ENCODE measurements at regions of chr15 and their contacts with region 1.

Region 1: DNA sequence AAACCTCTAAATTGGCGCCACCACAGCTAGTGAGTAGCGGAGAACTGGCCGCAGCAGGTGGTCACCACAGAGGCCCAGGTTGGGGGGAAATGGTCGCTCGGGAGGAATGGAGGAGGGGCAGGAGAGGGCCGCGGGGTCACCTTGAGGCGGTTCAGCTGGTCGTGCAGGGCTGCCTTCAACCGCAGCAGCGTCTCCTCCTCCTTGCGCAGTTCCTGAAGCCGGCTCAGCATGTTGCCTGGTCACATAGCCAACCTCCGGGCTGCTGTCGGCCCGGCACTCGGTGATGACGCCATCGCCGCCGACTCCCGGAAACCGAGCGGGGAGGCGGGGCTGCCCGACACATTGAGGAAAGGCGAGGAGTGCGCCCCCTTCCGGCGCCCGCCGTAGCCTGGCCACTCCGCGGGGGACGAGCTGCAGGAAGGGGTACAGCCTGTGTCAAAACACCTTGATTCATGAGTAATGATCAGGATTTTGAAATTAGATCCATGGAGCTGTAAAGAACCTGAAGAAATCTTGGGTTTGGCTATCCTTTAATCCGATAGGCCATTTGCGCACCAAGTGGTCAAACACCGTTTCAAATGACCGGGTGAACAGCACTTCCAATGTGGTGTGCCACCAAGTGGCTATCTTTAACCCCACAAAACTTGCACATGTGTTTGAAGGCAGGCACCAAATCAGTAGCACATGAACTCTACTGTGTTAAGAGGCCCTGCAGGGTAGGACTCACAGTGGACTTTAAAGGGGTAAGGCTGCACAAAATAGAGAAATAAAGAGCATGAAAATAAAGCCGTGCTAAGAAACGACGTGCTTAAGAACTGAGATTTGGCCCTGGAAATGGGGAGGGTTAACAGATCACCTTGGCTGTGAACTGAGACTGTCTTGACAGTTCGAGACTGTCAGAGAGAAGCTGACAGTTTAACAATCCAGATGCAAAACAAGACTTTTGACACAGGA is at the start of gene SNAPC5:
- DNase-seq: peak; percentile 84 to 97 (median 88)
- ATAC-seq: peak; percentile 92
- H3K4me3 ChIP-seq: peak within 1 kb of the TSS; percentile 83
- H3K27ac ChIP-seq: peak within 1 kb of the TSS; percentile 93
- H3K4me1 ChIP-seq: peaks cover 5 to 13% of the 10 kb centered on the region in 2 experiments
- H3K27me3 ChIP-seq: no peaks in the 10 kb centered on the region
- CTCF ChIP-seq: peak; percentile 83 to 99 (median 94)
- EP300 ChIP-seq: peak; percentile 51; the same call in 1 of the 2 replicates
- POLR2A ChIP-seq: peak; percentile 87
- RAD21 ChIP-seq: peak; percentile 53 to 70
- polyA plus RNA-seq, gene SNAPC5: 155 TPM

Region 2: GRCh38 chr15:66293419-66294156 is 204.2 kb before region 1 on chr15 and contains the start of gene DIS3L:
- CTCF ChIA-PET with region 1: no interaction called
- POLR2A ChIA-PET with region 1: no interaction called
- in situ Hi-C with region 1: no loop called
- intact Hi-C with region 1: loop called (anchors 5 kb)
- DNase-seq: peak; percentile 71 to 90 (median 86)
- ATAC-seq: peak; percentile 90
- H3K4me3 ChIP-seq: peak within 1 kb of the TSS; percentile 45
- H3K27ac ChIP-seq: peak within 1 kb of the TSS; percentile 82
- H3K4me1 ChIP-seq: peaks cover 17 to 20% of the 10 kb centered on the region in 2 experiments
- H3K27me3 ChIP-seq: no peaks in the 10 kb centered on the region
- CTCF ChIP-seq: no peak
- EP300 ChIP-seq: 0 out of 2 replicates have a peak, but pooled peaks have one; percentile 14
- POLR2A ChIP-seq: peak; percentile 23
- RAD21 ChIP-seq: no peak
- polyA plus RNA-seq, gene DIS3L: 5.9 to 6.4 TPM

Region 3: DNA sequence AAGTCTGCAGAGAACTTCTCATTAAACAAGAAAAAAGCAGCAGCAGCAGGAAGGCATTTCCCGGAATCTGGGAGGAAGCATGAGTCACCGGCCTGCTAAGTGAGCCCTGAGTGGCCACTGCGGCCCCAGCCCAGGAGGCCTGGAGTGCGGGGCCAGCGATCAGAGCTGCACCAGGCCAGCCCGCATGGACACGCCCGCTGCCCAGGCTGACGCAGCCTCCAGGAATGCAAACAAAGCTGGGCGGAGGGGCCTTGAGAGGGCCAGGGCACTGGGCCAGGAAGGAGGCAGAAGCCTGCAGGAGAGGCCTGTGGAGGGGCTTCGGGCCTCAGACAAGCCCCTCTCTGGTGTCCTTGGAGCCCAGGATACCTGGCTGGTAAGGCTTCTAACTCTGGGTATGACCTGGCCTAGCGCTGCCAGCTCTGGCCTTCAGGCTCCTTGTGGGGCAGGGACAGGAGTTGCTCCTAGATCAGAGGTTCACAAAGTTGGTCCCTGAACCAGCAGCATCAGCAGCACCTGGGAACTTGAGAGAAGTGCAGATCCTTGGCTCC is 305.5 kb after region 1 on chr15:
- CTCF ChIA-PET with region 1: no interaction called
- POLR2A ChIA-PET with region 1: no interaction called
- in situ Hi-C with region 1: no loop called
- intact Hi-C with region 1: no loop called
- DNase-seq: peak; percentile 93 to 95 (median 94)
- ATAC-seq: peak; percentile 100
- H3K4me3 ChIP-seq: no peak overlapping the region; the same call in 1 of the 2 replicates
- H3K27ac ChIP-seq: peak overlapping the region; percentile 79
- H3K4me1 ChIP-seq: peaks cover 27 to 47% of the 10 kb centered on the region in 2 experiments
- H3K27me3 ChIP-seq: no peaks in the 10 kb centered on the region
- CTCF ChIP-seq: no peak
- EP300 ChIP-seq: peak; percentile 73
- POLR2A ChIP-seq: no peak; the same call in 1 of the 2 replicates
- RAD21 ChIP-seq: peak in 1 of 2 experiments; percentile 22; a peak in 1 of 4 replicates

Measured in K562 (cell line).